CD4-positive, alpha-beta T cell (primary cell): ENCODE measurements at regions of chr13 and their contacts with region 1.

Region 1: DNA sequence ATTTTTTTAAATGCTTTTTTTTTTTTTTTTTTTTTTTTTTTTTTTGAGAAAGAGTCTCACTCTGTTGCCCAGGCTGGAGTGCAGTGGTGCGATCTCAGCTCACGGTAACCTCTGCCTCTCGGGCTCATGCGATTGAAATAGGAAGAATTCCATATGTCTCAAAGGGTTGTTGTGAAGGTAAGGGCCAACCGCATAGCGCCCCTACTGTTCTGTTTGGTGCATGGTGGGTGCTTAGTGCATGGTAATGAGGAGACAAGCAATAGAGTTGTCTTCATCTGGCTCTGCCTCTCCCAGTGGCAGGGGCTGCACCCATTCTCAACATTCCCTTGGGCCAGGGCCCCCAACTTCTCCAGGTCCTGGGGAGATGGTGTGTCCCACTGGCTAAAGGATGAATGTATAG is 68.7 kb downstream of the RASL11A start:
- DNase-seq: peak in 13 of 14 experiments; percentile 20 to 68 (median 39)
- ATAC-seq: peak; percentile 86
- H3K4me3 ChIP-seq: no peak overlapping the region
- H3K4me3 Mint-ChIP-seq: no peak overlapping the region
- H3K27ac ChIP-seq: no peak overlapping the region
- H3K27ac Mint-ChIP-seq: no peak overlapping the region
- H3K4me1 ChIP-seq: no peaks in the 10 kb centered on the region
- H3K4me1 Mint-ChIP-seq: peaks cover 5% of the 10 kb centered on the region
- H3K27me3 ChIP-seq: peaks cover 0 to 4% of the 10 kb centered on the region in 2 experiments
- H3K27me3 Mint-ChIP-seq: peaks cover 6% of the 10 kb centered on the region
- CTCF ChIP-seq: peak; percentile 70

Region 2: DNA sequence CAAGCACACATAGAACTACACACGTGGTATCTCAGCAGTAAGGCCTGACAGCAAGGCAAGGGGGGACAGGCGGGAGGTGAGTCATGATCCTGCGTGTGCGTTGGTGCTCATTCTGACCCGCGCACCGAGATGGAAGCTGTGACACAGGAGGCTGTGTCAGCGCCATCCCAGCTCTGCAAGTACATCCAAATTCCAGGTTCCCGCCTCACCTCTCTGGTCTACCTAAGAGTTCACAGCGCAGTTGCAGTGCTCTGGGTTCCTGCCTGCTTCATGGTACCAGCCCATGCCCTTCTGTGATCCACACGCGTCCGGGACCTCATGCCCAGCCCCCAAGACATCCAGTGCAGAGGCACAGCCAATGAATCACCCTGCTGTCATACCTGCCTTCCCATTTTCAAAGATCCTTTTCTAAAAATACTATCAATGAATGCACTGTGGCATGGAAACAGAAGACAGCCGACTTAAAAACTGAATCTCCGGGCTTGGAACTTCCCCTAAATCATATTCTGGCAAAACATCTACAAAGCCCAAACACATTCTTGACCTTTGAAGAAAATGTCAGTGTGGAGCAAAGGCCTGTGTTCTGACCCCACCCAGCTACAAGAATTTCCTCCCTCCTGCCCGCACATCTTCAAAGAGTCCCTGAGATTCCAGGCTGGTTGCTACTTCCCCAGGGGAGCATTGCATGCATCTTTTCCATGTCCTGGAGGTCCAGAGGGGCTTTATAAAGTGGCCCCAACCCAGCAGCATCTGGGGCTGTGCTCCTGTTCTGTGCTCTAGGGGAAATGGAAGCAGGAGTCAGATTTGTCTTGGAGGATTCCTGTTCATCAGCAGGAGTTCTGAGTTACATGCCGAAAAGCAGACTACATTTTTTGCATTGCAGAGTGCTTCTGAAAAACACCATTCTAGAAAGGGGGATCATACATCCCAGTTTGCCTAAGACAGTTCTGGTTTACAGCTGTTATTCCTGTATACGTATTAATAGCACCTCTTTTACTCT is 303.0 kb before region 1 on chr13:
- CTCF ChIA-PET with region 1: no interaction called
- POLR2A ChIA-PET with region 1: no interaction called
- intact Hi-C with region 1: no loop called
- DNase-seq: no peak
- ATAC-seq: no peak
- H3K4me3 ChIP-seq: no peak overlapping the region
- H3K4me3 Mint-ChIP-seq: no peak overlapping the region
- H3K27ac ChIP-seq: no peak overlapping the region
- H3K27ac Mint-ChIP-seq: no peak overlapping the region
- H3K4me1 ChIP-seq: no peaks in the 10 kb centered on the region
- H3K4me1 Mint-ChIP-seq: no peaks in the 10 kb centered on the region
- H3K27me3 ChIP-seq: peaks cover 0 to 4% of the 10 kb centered on the region in 2 experiments
- H3K27me3 Mint-ChIP-seq: peaks cover 32% of the 10 kb centered on the region
- CTCF ChIP-seq: no peak

Region 3: DNA sequence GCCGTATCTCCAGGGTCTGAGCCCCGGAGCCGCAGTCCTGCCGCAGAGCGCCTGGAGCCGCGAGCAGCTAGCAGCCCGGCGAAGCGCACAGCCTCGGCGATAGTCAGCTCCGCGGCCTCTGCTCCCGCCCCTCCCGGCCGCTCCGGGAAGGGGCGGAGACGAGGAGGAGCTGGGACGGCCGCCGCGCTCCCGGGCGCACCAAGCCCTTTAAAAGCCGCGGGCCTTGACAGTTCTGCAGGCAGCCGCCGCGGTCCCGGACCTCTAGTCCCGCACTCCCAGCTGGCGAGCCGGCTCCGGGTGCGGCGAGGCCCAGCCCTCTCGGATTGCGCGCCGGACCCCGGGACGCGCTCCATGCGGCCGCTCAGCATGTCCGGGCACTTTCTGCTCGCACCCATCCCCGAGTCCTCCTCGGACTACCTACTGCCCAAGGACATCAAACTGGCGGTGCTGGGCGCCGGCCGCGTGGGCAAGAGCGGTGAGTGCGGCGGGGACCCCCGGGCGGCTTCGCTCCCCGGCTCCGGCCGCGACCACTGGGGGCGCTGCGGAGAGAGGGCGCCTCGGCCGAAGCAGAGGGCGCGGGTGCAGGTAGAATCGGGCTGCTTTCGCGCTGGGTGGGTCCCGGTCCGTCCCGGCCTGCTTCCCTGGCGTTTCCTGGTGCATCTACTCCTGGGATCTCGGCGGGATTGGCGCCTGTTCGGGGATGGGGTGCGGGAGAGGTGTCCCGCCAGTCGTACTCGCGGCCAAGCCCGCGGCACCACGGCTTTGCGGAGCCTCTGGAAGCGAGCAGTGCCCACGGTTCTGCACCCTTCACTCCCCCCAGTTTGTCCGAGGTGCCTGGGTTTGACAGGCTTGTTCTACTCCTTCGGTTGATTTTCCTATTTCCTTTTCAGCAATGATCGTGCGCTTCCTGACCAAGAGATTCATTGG is 68.4 kb before region 1 on chr13 and contains the start of gene RASL11A:
- CTCF ChIA-PET with region 1: interaction called, 3 read pairs
- POLR2A ChIA-PET with region 1: interaction called, 3 read pairs
- intact Hi-C with region 1: loop called (anchors 5 to 10 kb)
- DNase-seq: peak; percentile 52 to 85 (median 68)
- ATAC-seq: peak; percentile 91
- H3K4me3 ChIP-seq: peak within 1 kb of the TSS; percentile 73
- H3K4me3 Mint-ChIP-seq: peak within 1 kb of the TSS; percentile 92
- H3K27ac ChIP-seq: no peak within 1 kb of the TSS
- H3K27ac Mint-ChIP-seq: peak within 1 kb of the TSS; percentile 68
- H3K4me1 ChIP-seq: peaks cover 17% of the 10 kb centered on the region
- H3K4me1 Mint-ChIP-seq: peaks cover 34% of the 10 kb centered on the region
- H3K27me3 ChIP-seq: peaks cover 5 to 8% of the 10 kb centered on the region in 2 experiments
- H3K27me3 Mint-ChIP-seq: peaks cover 14% of the 10 kb centered on the region
- CTCF ChIP-seq: peak; percentile 99
- total RNA-seq, gene RASL11A: 2.9 to 4.7 TPM

Region 4: GRCh38 chr13:27293873-27294515 is 45.3 kb before region 1 on chr13:
- CTCF ChIA-PET with region 1: no interaction called
- POLR2A ChIA-PET with region 1: no interaction called
- intact Hi-C with region 1: loop called in 1 of 2 experiments (anchors 5 kb)
- DNase-seq: peak in 9 of 14 experiments; percentile 9 to 50 (median 29)
- ATAC-seq: peak; percentile 77
- H3K4me3 ChIP-seq: no peak overlapping the region
- H3K4me3 Mint-ChIP-seq: peak overlapping the region; percentile 13
- H3K27ac ChIP-seq: peak overlapping the region; percentile 52 to 66
- H3K27ac Mint-ChIP-seq: peak overlapping the region; percentile 86
- H3K4me1 ChIP-seq: peaks cover 31% of the 10 kb centered on the region
- H3K4me1 Mint-ChIP-seq: peaks cover 33% of the 10 kb centered on the region
- H3K27me3 ChIP-seq: peaks cover 0 to 2% of the 10 kb centered on the region in 2 experiments
- H3K27me3 Mint-ChIP-seq: no peaks in the 10 kb centered on the region
- CTCF ChIP-seq: no peak

Region 5: GRCh38 chr13:27636589-27637288 is 297.4 kb after region 1 on chr13:
- CTCF ChIA-PET with region 1: no interaction called
- POLR2A ChIA-PET with region 1: no interaction called
- intact Hi-C with region 1: no loop called
- DNase-seq: no peak
- ATAC-seq: no peak
- H3K4me3 ChIP-seq: no peak overlapping the region
- H3K4me3 Mint-ChIP-seq: no peak overlapping the region
- H3K27ac ChIP-seq: no peak overlapping the region
- H3K27ac Mint-ChIP-seq: no peak overlapping the region
- H3K4me1 ChIP-seq: peaks cover 6% of the 10 kb centered on the region
- H3K4me1 Mint-ChIP-seq: peaks cover 82% of the 10 kb centered on the region
- H3K27me3 ChIP-seq: no peaks in the 10 kb centered on the region
- H3K27me3 Mint-ChIP-seq: no peaks in the 10 kb centered on the region
- CTCF ChIP-seq: no peak